Right ventricle myocardium superior (tissue), 1 donor: ENCODE measurements at regions of chr7 and their contacts with region 1.

Region 1: DNA sequence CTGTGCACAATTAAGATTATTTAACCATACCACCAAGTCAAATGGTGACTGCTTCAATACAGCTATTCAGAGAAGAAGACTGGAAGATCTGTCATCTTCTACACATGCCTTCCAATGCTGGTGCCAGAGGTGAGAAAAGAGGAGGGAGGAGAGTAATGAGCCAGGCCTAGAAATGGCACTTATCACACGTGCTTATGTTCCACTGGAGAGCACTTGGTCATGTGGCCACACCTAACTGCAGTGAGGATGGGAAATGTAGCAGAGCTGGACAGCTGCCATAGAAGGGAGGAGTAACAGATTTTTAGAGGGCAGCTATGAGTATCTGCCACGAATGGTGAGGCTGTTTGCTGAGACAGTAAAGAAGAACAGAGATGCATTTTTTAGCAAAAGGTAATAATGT is 77.1 kb downstream of the MPLKIP start:
- DNase-seq: no peak
- ATAC-seq: peak; percentile 65

Region 2: GRCh38 chr7:39896840-39897239 is 160.5 kb before region 1 on chr7:
- intact Hi-C with region 1: loop called (anchors 2 kb)
- DNase-seq: no peak
- ATAC-seq: no peak

Region 3: GRCh38 chr7:40147371-40148246 is 90.3 kb after region 1 on chr7:
- intact Hi-C with region 1: no loop called
- DNase-seq: no peak
- ATAC-seq: no peak

Region 4: DNA sequence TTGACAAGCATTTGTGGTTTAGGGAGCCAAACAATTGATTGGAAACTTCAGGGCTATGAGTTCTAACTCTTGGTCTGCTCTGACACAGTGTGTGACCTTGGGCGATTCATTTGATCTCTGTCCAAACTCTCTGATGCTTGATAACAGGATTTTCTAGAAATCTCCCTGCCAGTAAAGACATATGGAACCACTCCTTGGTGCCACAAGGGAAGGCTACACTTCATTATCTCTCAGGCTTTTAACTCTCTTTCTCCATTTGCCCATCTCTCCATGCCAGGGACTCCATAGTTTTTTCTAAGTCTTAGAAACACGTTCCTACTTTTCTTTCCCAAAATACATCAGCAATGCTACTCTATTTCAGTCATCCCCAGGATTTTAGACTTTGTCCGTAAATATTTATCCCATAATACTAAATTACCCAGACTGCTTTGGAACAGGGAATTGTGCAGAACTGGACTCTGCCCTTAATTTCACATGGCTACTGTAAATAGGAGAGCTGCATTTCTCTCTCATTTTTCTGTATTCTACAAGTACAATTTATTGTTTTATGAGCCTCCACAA is 565.7 kb after region 1 on chr7:
- intact Hi-C with region 1: no loop called
- DNase-seq: no peak
- ATAC-seq: no peak